GM12878 (cell line): ENCODE measurements at regions of chr5 and their contacts with region 1.

Region 1: GRCh38 chr5:142568283-142568995 is 117.5 kb downstream of the FGF1 start:
- DNase-seq: no peak
- ATAC-seq: no peak
- H3K4me3 ChIP-seq: no peak overlapping the region
- H3K27ac ChIP-seq: no peak overlapping the region
- H3K4me1 ChIP-seq: no peaks in the 10 kb centered on the region
- H3K27me3 ChIP-seq: no peaks in the 10 kb centered on the region; a peak in 1 of 4 replicates
- CTCF ChIP-seq: no peak
- EP300 ChIP-seq: no peak
- POLR2A ChIP-seq: no peak
- RAD21 ChIP-seq: no peak

Region 2: GRCh38 chr5:141716009-141716408 is 852.4 kb before region 1 on chr5:
- CTCF ChIA-PET with region 1: no interaction called
- POLR2A ChIA-PET with region 1: no interaction called
- RAD21 ChIA-PET with region 1: no interaction called
- SMC1A ChIA-PET with region 1: no interaction called
- in situ Hi-C with region 1: no loop called
- intact Hi-C with region 1: no loop called
- DNase-seq: no peak
- ATAC-seq: no peak
- H3K4me3 ChIP-seq: no peak overlapping the region
- H3K27ac ChIP-seq: no peak overlapping the region
- H3K4me1 ChIP-seq: peaks cover 2% of the 10 kb centered on the region
- H3K27me3 ChIP-seq: peaks cover 0 to 3% of the 10 kb centered on the region in 2 experiments; a peak in 1 of 4 replicates
- CTCF ChIP-seq: no peak
- EP300 ChIP-seq: no peak
- POLR2A ChIP-seq: no peak
- RAD21 ChIP-seq: no peak

Region 3: DNA sequence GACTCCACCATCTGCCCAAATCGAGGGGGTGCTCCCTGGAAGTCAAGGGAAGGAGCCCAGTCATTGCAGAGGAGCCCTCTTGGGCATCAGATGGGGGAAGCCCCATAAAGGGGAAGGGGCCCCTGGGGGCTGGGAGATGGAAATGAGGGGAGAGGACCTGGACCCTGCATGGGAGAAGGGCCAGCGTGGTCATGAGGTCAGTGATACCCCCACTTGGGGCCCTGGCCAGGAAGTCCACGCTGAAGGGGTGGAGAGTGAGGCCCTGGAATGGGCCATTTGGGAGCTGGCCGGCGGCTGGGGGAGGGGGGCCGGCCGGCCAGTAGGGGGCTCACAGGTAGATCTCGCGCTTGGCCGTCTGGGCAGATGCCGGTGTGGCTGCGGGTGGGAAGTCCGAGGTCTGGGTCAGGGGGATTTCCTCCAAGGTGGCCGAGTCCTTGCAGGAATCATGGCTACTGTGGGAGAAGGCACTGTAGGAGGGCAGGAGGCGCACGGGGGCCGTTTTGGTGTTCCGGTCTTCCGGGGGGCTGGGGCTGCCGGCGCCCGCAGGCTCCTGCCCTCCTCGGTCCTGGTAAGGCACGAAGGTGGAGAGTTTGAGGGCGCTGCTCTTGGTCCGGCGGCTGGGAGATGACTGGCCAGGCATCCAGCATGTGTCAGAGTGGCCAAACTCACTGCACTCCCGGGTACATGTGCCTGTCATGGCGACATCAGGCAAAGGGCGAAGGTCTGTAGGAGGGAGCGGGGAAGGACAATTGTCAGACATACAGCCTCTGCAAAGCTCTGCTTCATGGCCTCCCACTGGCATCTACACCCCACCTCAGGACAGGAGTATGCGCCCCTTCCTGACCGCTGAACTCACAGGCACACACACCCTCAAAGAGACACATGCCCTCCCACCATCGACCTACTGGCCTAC is 714.5 kb before region 1 on chr5:
- CTCF ChIA-PET with region 1: no interaction called
- POLR2A ChIA-PET with region 1: interaction called, 11 read pairs
- RAD21 ChIA-PET with region 1: no interaction called
- SMC1A ChIA-PET with region 1: no interaction called
- in situ Hi-C with region 1: no loop called
- intact Hi-C with region 1: no loop called
- DNase-seq: no peak
- ATAC-seq: no peak
- H3K4me3 ChIP-seq: no peak overlapping the region
- H3K27ac ChIP-seq: no peak overlapping the region
- H3K4me1 ChIP-seq: peaks cover 3% of the 10 kb centered on the region
- H3K27me3 ChIP-seq: no peaks in the 10 kb centered on the region
- CTCF ChIP-seq: no peak
- EP300 ChIP-seq: no peak
- POLR2A ChIP-seq: no peak
- RAD21 ChIP-seq: no peak

Region 4: GRCh38 chr5:142548739-142549275 is 19.6 kb before region 1 on chr5:
- CTCF ChIA-PET with region 1: no interaction called
- POLR2A ChIA-PET with region 1: no interaction called
- RAD21 ChIA-PET with region 1: no interaction called
- SMC1A ChIA-PET with region 1: no interaction called
- in situ Hi-C with region 1: no loop called
- intact Hi-C with region 1: no loop called
- DNase-seq: peak; percentile 12
- ATAC-seq: peak; percentile 78
- H3K4me3 ChIP-seq: no peak overlapping the region
- H3K27ac ChIP-seq: no peak overlapping the region
- H3K4me1 ChIP-seq: no peaks in the 10 kb centered on the region
- H3K27me3 ChIP-seq: peaks cover 0 to 6% of the 10 kb centered on the region in 2 experiments; a peak in 2 of 4 replicates
- CTCF ChIP-seq: peak; percentile 46 to 53 (median 50); a peak in 5 of 6 replicates
- EP300 ChIP-seq: no peak
- POLR2A ChIP-seq: no peak
- RAD21 ChIP-seq: peak; percentile 31